Psoas muscle (tissue), 8 donors: ENCODE measurements at regions of chr6 and their contacts with region 1.

Region 1: DNA sequence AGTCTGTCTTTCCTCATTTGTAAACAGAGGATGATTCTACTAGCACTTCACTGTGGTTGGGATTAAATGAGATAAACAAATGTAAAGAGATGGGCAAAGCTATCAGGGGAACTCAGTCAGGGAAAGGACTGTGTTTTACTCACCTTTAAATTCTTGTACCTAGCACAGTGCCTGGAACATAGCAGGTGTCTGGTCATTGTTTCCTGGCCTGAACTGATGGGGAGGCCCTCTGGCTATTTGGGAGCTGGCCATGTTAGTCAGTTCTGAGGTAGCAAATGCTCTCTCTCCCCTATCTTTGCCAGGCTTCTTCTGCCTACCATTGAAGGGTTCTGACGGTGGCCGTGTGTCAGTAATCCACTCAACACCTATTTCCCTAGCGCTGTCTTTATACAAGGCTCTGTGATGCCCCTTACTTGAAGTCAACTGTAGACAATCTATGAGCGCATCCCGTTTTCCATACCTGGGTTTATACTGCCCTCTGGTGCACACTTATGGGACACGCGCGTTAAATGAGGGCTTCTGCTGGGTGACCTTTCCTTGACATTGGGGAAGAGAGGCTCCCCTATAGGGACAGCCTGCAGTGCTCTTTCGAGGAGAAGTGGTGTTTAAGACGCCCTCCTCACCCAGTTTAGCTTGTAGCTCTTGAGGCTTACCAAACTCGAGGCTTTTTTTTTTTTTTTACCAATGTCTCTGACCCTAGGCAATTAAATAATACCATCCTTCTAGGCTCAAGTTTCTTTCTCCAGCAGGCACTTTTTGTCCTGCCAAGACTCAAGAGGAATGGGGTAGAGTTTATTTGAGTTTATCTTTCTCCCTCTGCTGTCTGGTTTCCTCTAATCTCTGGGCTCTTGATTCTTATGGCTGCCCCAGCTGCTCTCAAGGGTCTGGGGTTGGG is 4.0 kb upstream of the SPATS1 start:
- DNase-seq: peak; percentile 47 to 66
- ATAC-seq: peak; percentile 84 to 92 (median 87)
- H3K4me3 ChIP-seq: no peak overlapping the region
- H3K27ac ChIP-seq: no peak overlapping the region
- H3K4me1 ChIP-seq: no peaks in the 10 kb centered on the region
- H3K27me3 ChIP-seq: peaks cover 0 to 19% (median 3%) of the 10 kb centered on the region in 3 donors
- CTCF ChIP-seq: peak; percentile 67

Region 2: GRCh38 chr6:44172731-44173500 is 165.6 kb before region 1 on chr6:
- intact Hi-C with region 1: loop called (anchors 2 to 5 kb)
- DNase-seq: peak; percentile 85 to 91
- ATAC-seq: peak; percentile 95 to 98 (median 96)
- H3K4me3 ChIP-seq: no peak overlapping the region
- H3K27ac ChIP-seq: no peak overlapping the region
- H3K4me1 ChIP-seq: peaks cover 8% of the 10 kb centered on the region
- H3K27me3 ChIP-seq: no peaks in the 10 kb centered on the region
- CTCF ChIP-seq: peak; percentile 90

Region 3: GRCh38 chr6:44265007-44265721 is 73.3 kb before region 1 on chr6 and contains the start of gene NFKBIE:
- intact Hi-C with region 1: loop called (anchors 1 to 5 kb)
- DNase-seq: peak; percentile 96 to 97
- ATAC-seq: peak; percentile 88 to 94 (median 90)
- H3K4me3 ChIP-seq: peak within 1 kb of the TSS; percentile 73
- H3K27ac ChIP-seq: peak within 1 kb of the TSS; percentile 73
- H3K4me1 ChIP-seq: peaks cover 15% of the 10 kb centered on the region
- H3K27me3 ChIP-seq: peaks cover 0 to 11% (median 8%) of the 10 kb centered on the region in 3 donors
- CTCF ChIP-seq: no peak
- total RNA-seq, gene NFKBIE: 2.1 to 5.0 (median 3.0) TPM